ENCODE measurements at regions of chr18 and their contacts with region 1.

Region 1: GRCh38 chr18:56672391-56672790 is 21.2 kb downstream of the WDR7 start:
- DNase-seq: no peak
- ATAC-seq: no peak
- H3K4me3 ChIP-seq: no peak overlapping the region
- H3K27ac ChIP-seq: no peak overlapping the region
- H3K4me1 ChIP-seq: no peaks in the 10 kb centered on the region
- H3K27me3 ChIP-seq: no peaks in the 10 kb centered on the region
- CTCF ChIP-seq: no peak

Region 2: GRCh38 chr18:55234366-55235093 is 1437.9 kb before region 1 on chr18:
- CTCF ChIA-PET with region 1: no interaction called
- POLR2A ChIA-PET with region 1: interaction called, 10 read pairs
- in situ Hi-C with region 1: no loop called
- intact Hi-C with region 1: no loop called
- DNase-seq: peak; percentile 61
- ATAC-seq: peak; percentile 91
- H3K4me3 ChIP-seq: no peak overlapping the region
- H3K27ac ChIP-seq: no peak overlapping the region
- H3K4me1 ChIP-seq: peaks cover 4% of the 10 kb centered on the region; the same call in 1 of the 2 replicates
- H3K27me3 ChIP-seq: no peaks in the 10 kb centered on the region
- CTCF ChIP-seq: peak; percentile 72